HEK293 (cell line): ENCODE measurements at regions of chr5 and their contacts with region 1.

Region 1: GRCh38 chr5:5421961-5422818 is at the start of gene ICE1:
- H3K4me3 ChIP-seq: peak within 1 kb of the TSS; percentile 79
- H3K27ac ChIP-seq: peak within 1 kb of the TSS; percentile 85
- H3K4me1 ChIP-seq: peaks cover 15% of the 10 kb centered on the region
- CTCF ChIP-seq: peak; percentile 45; the same call in 1 of the 2 replicates

Region 2: DNA sequence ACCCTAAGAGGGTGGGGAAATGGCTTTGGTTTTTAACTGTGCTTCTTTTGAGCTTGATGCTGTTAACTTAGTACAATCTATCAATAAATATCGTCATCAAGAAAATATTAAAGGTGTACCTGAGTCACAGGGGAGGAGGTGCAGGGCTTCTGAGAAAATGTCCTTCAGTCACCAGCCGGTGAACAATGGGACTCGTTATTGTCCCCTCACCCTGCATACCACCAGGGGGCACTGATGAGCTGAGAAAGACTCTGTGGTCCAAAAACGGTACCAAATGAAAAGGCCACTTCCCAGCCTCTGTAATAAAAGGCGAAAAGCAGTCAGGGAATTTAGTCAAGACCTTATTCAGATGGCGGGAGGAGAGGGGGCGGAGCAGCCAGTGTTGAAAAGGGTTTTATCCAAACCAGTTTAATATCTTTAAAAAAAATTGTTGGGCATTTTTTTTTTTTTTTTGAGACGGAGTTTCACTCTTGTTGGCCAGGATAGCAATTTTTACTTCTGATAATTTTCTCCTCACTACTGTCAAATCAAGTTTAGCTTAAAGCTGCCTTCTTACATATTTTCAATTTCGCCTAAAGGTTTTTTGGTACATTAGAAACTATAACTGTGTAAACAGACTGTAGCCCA is 554.0 kb before region 1 on chr5:
- CTCF ChIA-PET with region 1: interaction called, 34 read pairs
- POLR2A ChIA-PET with region 1: no interaction called
- H3K4me3 ChIP-seq: no peak overlapping the region
- H3K27ac ChIP-seq: no peak overlapping the region
- H3K4me1 ChIP-seq: no peaks in the 10 kb centered on the region
- CTCF ChIP-seq: 0 out of 2 replicates have a peak, but pooled peaks have one; percentile 13

Region 3: GRCh38 chr5:4879693-4880303 is 542.4 kb before region 1 on chr5:
- CTCF ChIA-PET with region 1: interaction called, 111 read pairs
- POLR2A ChIA-PET with region 1: no interaction called
- H3K4me3 ChIP-seq: no peak overlapping the region
- H3K27ac ChIP-seq: no peak overlapping the region
- H3K4me1 ChIP-seq: no peaks in the 10 kb centered on the region
- CTCF ChIP-seq: peak; percentile 89

Region 4: DNA sequence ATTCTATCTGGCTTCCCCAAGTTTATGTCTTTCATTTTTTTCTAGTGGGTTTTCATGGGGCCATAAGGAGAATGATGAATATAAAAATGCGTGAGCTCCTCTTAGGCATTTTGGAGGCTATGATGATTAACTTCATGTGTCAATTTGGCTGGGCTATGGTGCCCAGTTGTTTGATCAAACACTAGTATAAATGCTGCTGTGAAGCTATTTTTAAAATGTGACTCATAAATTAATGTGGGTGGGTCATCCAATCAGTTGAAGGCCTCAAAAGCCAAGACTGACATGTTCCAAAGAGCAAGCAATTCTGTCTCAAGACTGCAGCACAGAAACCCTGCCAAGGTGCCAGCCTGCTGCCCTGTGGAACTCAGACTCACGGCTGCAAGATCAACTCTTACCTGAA is 24.1 kb before region 1 on chr5:
- CTCF ChIA-PET with region 1: interaction called, 45 read pairs
- POLR2A ChIA-PET with region 1: interaction called, 3 read pairs
- H3K4me3 ChIP-seq: no peak overlapping the region
- H3K27ac ChIP-seq: no peak overlapping the region
- H3K4me1 ChIP-seq: no peaks in the 10 kb centered on the region
- CTCF ChIP-seq: no peak

Region 5: GRCh38 chr5:5551499-5551898 is 129.3 kb after region 1 on chr5:
- CTCF ChIA-PET with region 1: no interaction called
- POLR2A ChIA-PET with region 1: no interaction called
- H3K4me3 ChIP-seq: no peak overlapping the region
- H3K27ac ChIP-seq: no peak overlapping the region
- H3K4me1 ChIP-seq: no peaks in the 10 kb centered on the region
- CTCF ChIP-seq: no peak

Region 6: GRCh38 chr5:5933651-5934050 is 511.5 kb after region 1 on chr5:
- CTCF ChIA-PET with region 1: no interaction called
- POLR2A ChIA-PET with region 1: no interaction called
- H3K4me3 ChIP-seq: no peak overlapping the region
- H3K27ac ChIP-seq: no peak overlapping the region
- H3K4me1 ChIP-seq: no peaks in the 10 kb centered on the region
- CTCF ChIP-seq: no peak